Upper lobe of right lung (tissue), 1 donor: ENCODE measurements at regions of chr7 and their contacts with region 1.

Region 1: DNA sequence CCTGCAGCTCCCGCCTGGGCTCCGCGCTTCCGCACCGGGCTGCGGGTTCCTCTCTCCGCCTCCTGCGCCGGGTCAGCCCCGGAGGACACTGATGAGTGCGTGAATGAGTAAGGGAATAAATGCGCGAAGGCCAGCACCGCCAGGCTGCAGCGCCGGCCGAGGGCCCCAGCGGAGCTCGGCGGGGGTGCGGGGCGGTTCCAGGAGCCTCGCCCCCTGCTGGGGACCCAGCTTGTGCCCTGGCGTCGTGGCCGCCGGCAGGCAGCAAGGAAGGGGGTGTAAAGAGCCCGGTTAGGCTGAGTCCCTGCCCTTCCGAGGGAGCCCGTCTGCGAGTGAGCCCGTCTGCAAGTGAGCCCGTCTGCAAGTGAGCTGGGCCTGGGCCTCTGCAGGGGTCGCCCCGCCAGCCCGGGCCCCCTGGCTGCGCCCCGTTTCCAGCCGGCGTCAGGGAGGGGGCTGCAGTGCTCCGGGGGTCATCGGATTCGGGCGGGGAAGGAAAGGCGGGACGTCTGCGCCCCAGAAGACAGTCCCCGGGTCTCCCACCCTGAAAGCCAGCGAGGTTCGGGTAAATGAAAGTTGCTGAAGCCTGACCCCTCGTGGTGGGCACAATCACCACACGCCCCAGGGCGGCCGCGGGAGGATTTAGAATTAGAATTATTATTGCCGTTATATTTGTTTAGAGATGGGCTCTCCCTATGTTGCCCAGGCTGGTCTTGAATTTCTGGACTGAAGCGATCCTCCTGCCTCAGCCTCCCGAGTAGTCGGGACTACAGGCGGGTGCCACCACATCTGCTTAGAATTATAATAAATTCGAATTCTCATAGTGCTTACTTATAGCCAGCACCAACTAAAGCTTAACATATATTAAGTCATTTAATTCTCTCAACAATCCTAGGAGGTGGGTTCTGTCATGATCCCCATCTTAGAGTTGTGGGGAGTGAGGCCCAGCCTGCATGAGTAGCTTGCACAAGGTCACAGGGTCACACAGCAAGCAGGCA is 8.6 kb upstream of the CRYGN start:
- DNase-seq: peak; percentile 83
- ATAC-seq: peak; percentile 91
- H3K4me3 ChIP-seq: peak overlapping the region; percentile 63
- H3K27ac ChIP-seq: peak overlapping the region; percentile 37
- H3K4me1 ChIP-seq: peaks cover 5% of the 10 kb centered on the region
- H3K27me3 ChIP-seq: no peaks in the 10 kb centered on the region
- CTCF ChIP-seq: peak; percentile 82

Region 2: DNA sequence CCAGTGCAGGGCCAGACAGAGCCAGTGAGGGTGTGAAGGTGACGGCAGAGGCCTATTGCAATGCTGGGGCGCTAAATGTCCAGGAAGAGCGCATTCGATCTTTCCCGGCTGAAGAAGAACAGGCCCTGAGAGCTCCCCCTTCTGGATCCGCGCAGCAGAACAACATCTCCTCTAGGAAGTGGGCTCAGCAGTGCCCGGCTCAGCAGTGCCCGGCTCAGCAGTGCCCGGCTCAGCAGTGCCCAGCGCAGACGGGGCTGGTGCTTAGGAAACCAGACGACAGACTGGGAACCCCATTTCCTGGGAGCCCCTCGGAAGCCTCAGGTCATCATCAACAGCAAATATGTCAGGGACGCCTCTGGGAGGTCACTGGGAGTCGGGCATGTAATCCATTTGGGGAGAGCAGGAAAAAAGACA is 462.5 kb before region 1 on chr7:
- intact Hi-C with region 1: no loop called
- DNase-seq: no peak
- ATAC-seq: peak; percentile 69
- H3K4me3 ChIP-seq: no peak overlapping the region
- H3K27ac ChIP-seq: no peak overlapping the region
- H3K4me1 ChIP-seq: peaks cover 13% of the 10 kb centered on the region
- H3K27me3 ChIP-seq: no peaks in the 10 kb centered on the region
- CTCF ChIP-seq: peak; percentile 66

Region 3: GRCh38 chr7:151372612-151373265 is 75.8 kb before region 1 on chr7:
- intact Hi-C with region 1: loop called (anchors 5 kb)
- DNase-seq: no peak
- ATAC-seq: no peak
- H3K4me3 ChIP-seq: no peak overlapping the region
- H3K27ac ChIP-seq: no peak overlapping the region
- H3K4me1 ChIP-seq: peaks cover 8% of the 10 kb centered on the region
- H3K27me3 ChIP-seq: no peaks in the 10 kb centered on the region
- CTCF ChIP-seq: no peak

Region 4: GRCh38 chr7:152512706-152513105 is 1064.1 kb after region 1 on chr7:
- intact Hi-C with region 1: no loop called
- DNase-seq: no peak
- ATAC-seq: no peak
- H3K4me3 ChIP-seq: no peak overlapping the region
- H3K27ac ChIP-seq: no peak overlapping the region
- H3K4me1 ChIP-seq: no peaks in the 10 kb centered on the region
- H3K27me3 ChIP-seq: no peaks in the 10 kb centered on the region
- CTCF ChIP-seq: no peak